Activated CD4-positive, alpha-beta T cell treated with anti-CD3 and anti-CD28 coated beads, Interleukin-2, amount 10 ng/mL, durations not matched to agents 7 days and 5 days (primary cell): ENCODE measurements at regions of chr3 and their contacts with region 1.

Region 1: DNA sequence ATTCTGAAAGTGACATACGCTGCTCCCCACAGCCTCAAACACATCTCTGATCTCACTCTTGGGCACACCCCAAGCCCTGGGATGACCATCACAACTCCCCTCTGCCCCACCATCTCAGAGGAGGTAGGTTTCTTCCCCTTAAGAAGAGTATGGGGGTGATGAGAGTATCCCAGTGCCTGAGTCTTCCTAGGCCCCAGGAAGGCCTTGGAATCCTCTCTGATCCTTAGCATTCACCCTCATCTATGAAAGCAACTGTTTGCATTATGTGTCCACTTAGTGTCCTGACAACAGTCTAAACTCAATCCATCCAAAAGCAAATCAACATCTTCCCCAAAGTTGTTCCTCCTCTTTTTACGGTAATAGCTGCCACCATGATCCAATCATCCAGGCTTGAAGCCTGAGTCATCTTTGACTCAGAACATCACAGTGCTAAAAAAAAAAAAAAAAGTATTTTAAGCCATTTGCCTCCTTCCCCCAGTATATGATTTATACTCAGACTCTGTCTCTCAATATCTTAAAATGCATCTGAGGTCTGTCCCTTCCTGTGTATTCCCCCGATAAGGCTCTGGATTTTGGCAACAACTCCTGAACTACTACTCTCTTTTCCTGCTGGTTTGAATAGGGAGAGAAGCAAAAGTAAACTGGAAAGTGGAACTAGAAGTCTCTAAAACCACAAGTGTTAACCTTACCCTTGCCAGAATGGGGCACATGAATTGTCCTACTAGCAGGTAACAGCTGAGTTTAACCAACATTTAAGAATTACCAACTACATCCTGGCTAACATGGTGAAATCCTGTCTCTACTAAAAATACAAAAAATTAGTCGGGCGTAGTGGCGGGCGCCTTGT is 22.5 kb downstream of the POPDC2 start:
- DNase-seq: peak; percentile 9
- H3K4me3 Mint-ChIP-seq: no peak overlapping the region
- H3K27ac Mint-ChIP-seq: peak overlapping the region; percentile 94
- H3K4me1 Mint-ChIP-seq: peaks cover 33% of the 10 kb centered on the region
- H3K27me3 Mint-ChIP-seq: no peaks in the 10 kb centered on the region

Region 2: GRCh38 chr3:119620899-119621298 is 17.0 kb before region 1 on chr3:
- CTCF ChIA-PET with region 1: interaction called, 11 read pairs
- POLR2A ChIA-PET with region 1: no interaction called
- DNase-seq: no peak
- H3K4me3 Mint-ChIP-seq: no peak overlapping the region
- H3K27ac Mint-ChIP-seq: no peak overlapping the region
- H3K4me1 Mint-ChIP-seq: no peaks in the 10 kb centered on the region
- H3K27me3 Mint-ChIP-seq: peaks cover 8% of the 10 kb centered on the region

Region 3: GRCh38 chr3:119774444-119774843 is 136.5 kb after region 1 on chr3:
- CTCF ChIA-PET with region 1: no interaction called
- POLR2A ChIA-PET with region 1: no interaction called
- DNase-seq: no peak
- H3K4me3 Mint-ChIP-seq: no peak overlapping the region
- H3K27ac Mint-ChIP-seq: no peak overlapping the region
- H3K4me1 Mint-ChIP-seq: no peaks in the 10 kb centered on the region
- H3K27me3 Mint-ChIP-seq: peaks cover 11% of the 10 kb centered on the region